BJ (cell line): ENCODE measurements at regions of chr7 and their contacts with region 1.

Region 1: GRCh38 chr7:101287032-101287431 is 34.6 kb downstream of the IFT22 start:
- DNase-seq: no peak
- H3K4me3 ChIP-seq: no peak overlapping the region
- H3K27me3 ChIP-seq: peaks cover 9% of the 10 kb centered on the region; the same call in 1 of the 2 replicates
- CTCF ChIP-seq: no peak

Region 2: GRCh38 chr7:101099969-101100781 is 186.9 kb before region 1 on chr7:
- CTCF ChIA-PET with region 1: interaction called, 3 read pairs
- POLR2A ChIA-PET with region 1: interaction called, 10 read pairs
- DNase-seq: peak; percentile 96
- H3K4me3 ChIP-seq: no peak overlapping the region
- H3K27me3 ChIP-seq: no peaks in the 10 kb centered on the region
- CTCF ChIP-seq: no peak

Region 3: DNA sequence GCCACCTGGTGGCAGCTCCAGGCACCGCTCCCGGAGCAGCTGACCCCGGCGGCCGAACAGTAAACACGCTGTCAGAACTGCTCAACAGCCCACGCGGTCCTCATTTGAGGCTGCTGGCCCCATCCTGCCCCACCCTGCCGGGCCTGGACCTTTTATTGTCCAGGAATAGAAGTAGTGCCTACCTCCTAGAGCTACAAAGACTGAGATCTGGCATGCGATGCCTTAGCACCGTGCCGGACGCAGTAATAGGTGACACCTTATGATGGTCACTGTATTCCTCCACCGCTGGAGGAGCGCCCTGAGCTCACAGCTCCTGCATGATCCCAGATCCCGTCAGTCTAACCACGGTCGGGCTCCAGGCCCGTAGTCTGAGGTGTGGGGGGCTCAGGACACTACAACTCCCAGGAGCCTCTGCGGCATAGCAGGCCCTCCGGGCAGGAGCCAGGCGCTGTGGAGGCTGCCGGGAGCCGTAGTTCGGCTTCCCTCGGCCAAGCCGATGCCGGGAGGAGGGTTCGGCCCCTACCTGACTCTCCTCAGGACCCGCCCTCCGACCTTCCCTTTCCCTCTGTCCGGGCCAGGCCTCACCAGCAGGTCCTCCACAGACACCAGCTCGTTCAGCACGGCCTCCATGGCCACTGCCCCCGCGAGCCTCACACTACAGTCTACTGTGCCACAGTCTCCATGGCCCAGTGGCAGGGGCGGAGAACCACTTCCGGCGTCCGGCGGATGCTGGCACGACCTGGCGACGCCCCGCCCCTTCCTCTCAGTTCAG is 42.5 kb before region 1 on chr7 and contains the start of gene FIS1:
- CTCF ChIA-PET with region 1: interaction called, 14 read pairs
- POLR2A ChIA-PET with region 1: no interaction called
- DNase-seq: peak; percentile 47
- H3K4me3 ChIP-seq: peak within 1 kb of the TSS; percentile 60
- H3K27me3 ChIP-seq: no peaks in the 10 kb centered on the region
- CTCF ChIP-seq: peak; percentile 92
- polyA plus RNA-seq, gene FIS1: 276 and 329 TPM in 2 replicates

Region 4: GRCh38 chr7:101265622-101266516 is 21.2 kb before region 1 on chr7:
- CTCF ChIA-PET with region 1: interaction called, 12 read pairs
- POLR2A ChIA-PET with region 1: no interaction called
- DNase-seq: no peak
- H3K4me3 ChIP-seq: no peak overlapping the region
- H3K27me3 ChIP-seq: peaks cover 2% of the 10 kb centered on the region; the same call in 1 of the 2 replicates
- CTCF ChIP-seq: no peak

Region 5: DNA sequence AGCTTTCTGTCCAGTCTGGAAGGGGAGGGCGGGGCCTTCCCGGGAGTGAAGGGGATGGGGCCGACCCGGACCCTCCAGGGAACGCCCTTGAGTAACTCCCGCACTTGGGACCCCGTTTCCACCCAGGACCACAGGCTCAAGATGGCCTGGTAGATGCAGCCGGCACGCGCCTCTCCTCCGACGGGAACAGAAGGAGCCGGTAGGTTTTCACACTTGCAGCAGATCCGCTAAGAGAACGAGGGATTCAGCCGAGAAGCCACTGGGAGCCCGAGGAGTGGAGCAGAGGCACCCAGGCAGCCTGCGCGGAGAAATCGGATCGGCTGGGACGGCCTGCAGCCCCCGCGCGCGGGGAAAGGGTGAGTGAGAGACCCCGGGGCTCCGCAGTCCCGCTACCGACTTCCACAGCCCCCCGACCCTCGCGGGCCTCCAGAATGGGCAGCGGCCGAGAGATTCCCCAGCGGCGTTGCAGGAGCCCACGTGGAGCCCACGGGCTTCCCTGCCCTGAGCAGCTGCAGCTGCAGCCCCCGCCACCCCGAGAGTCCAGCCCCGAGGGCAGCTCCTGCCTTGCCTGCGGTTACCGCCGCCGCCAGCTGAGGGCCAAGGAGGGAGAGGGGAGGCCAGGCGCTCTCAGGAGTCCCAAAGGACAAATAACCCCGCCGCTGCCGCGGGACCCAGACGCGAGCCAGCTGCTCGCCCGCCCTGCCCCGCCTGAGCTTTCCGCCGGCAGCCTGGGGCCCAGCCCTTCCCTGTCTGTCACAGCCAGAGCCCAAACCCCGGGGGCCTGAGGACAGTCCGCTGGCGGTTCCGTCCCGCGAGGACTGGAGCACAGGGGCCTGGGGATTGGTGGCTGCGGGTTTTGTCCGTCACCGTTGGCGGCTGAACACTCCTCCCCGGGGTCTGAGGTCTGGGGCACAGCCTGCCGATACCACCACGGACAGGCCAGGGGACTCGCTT is 12.8 kb after region 1 on chr7:
- CTCF ChIA-PET with region 1: interaction called, 27 read pairs
- POLR2A ChIA-PET with region 1: no interaction called
- DNase-seq: no peak
- H3K4me3 ChIP-seq: no peak overlapping the region
- H3K27me3 ChIP-seq: peaks cover 37% of the 10 kb centered on the region
- CTCF ChIP-seq: no peak